PC-9 (cell line): ENCODE measurements at regions of chr10 and their contacts with region 1.

Region 1: GRCh38 chr10:72126184-72126871 is 38.0 kb upstream of the SPOCK2 start:
- DNase-seq: no peak
- H3K4me3 ChIP-seq: no peak overlapping the region
- H3K27ac ChIP-seq: no peak overlapping the region
- H3K4me1 ChIP-seq: no peaks in the 10 kb centered on the region
- H3K27me3 ChIP-seq: no peaks in the 10 kb centered on the region
- CTCF ChIP-seq: peak; percentile 71

Region 2: GRCh38 chr10:72026278-72027111 is 99.8 kb before region 1 on chr10:
- CTCF ChIA-PET with region 1: no interaction called
- POLR2A ChIA-PET with region 1: no interaction called
- intact Hi-C with region 1: no loop called
- DNase-seq: peak in 1 of 2 experiments; percentile 26
- H3K4me3 ChIP-seq: no peak overlapping the region
- H3K27ac ChIP-seq: no peak overlapping the region
- H3K4me1 ChIP-seq: peaks cover 20% of the 10 kb centered on the region
- H3K27me3 ChIP-seq: no peaks in the 10 kb centered on the region
- CTCF ChIP-seq: no peak

Region 3: DNA sequence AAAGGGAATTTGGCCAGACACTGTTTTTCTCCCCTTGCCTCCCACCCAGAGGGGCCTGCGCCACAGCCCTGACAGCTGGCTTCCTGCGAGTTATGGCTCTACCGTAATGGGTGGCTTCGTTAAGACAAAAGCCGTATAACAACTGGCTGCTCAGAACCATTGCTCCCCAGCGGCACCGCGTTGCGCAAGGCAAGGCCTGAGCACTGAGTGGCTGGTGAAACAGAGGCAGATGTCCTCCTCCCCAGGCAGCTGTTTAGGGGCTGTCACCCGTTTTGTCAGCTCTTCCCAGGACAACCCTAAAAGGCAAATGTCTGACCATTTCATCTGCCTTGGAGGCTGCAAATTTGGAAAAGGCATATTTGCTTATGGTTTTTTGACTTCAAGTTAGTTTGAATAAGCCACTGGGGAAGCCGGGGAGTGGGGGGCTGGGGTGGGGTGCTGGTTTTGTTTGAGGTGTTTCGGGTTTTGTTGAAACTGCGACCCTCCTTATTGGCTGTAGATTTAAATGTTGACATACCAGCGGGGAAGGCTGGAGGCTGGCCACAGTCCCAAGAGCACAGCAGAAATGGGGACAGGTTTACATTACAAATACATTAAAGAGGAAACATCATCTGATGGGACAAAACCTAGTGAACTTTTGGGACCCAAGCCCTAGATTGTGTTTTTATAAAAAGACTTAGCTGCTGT is 37.3 kb before region 1 on chr10:
- CTCF ChIA-PET with region 1: no interaction called
- POLR2A ChIA-PET with region 1: interaction called, 10 read pairs
- intact Hi-C with region 1: no loop called
- DNase-seq: peak in 1 of 2 experiments; percentile 1
- H3K4me3 ChIP-seq: no peak overlapping the region
- H3K27ac ChIP-seq: no peak overlapping the region
- H3K4me1 ChIP-seq: peaks cover 27% of the 10 kb centered on the region
- H3K27me3 ChIP-seq: no peaks in the 10 kb centered on the region
- CTCF ChIP-seq: no peak

Region 4: DNA sequence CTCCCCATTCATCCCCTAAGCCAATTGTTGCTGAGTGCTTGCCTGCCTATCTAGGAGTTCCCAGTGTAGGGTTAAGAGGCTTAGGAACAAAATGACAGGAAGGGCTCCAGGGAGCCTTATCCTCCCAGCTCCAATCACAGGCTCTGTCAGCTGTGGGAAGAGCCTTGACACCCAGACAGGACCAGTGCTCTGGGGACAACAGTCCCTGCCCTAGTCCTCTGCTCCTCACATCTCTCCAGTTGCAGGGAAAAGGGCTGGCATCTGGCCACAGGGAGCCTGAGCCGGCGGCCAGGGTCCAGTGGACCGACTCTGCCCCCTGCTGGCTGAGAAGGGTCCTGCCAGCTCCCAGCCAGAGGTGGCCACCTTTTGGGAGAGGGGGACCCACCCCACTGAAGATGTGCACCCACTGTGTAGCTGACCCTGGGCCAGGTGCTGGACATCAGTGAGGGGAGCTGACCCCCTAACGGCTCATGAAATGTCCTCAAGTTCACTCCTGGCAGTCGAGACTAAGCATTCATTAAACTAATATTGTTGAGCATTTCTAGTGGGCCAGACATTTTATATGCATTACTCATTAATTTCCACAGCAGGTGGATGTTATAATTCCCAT is 210.8 kb after region 1 on chr10:
- CTCF ChIA-PET with region 1: no interaction called
- POLR2A ChIA-PET with region 1: interaction called, 11 read pairs
- intact Hi-C with region 1: loop called (anchors 1 kb)
- DNase-seq: peak; percentile 52 to 84
- H3K4me3 ChIP-seq: no peak overlapping the region
- H3K27ac ChIP-seq: no peak overlapping the region
- H3K4me1 ChIP-seq: peaks cover 22% of the 10 kb centered on the region
- H3K27me3 ChIP-seq: no peaks in the 10 kb centered on the region
- CTCF ChIP-seq: peak; percentile 99